Posterior vena cava (tissue), 2 donors: ENCODE measurements at regions of chr7 and their contacts with region 1.

Region 1: DNA sequence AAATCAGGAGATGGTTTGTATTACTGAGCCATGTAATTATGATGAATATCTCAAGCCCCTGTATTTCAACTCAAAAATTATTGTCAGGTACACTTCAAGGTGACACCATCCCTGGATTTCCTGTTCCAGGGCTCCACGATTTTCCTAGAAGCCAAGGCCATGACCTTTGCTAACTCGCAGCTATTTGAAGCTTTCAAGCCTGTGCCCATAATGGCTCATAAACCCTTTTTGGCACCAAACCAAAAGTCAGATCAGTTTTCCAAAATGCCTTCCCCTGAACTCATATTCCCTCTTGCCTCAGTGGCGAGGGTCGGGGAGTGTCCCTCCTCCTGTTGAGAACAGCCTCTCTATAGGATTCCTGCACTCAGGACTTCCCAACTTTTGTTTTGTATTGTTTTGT is 70.8 kb downstream of the HIP1 start:
- DNase-seq: no peak

Region 2: GRCh38 chr7:75650681-75651080 is 17.3 kb before region 1 on chr7:
- intact Hi-C with region 1: no loop called
- DNase-seq: peak; percentile 85

Region 3: GRCh38 chr7:75711656-75712514 is 43.9 kb after region 1 on chr7:
- intact Hi-C with region 1: loop called in 1 of 2 experiments (anchors 2 kb)
- DNase-seq: no peak

Region 4: GRCh38 chr7:76340617-76341131 is 672.7 kb after region 1 on chr7:
- intact Hi-C with region 1: no loop called
- DNase-seq: peak; percentile 72